OCI-LY7 (cell line): ENCODE measurements at regions of chr17 and their contacts with region 1.

Region 1: DNA sequence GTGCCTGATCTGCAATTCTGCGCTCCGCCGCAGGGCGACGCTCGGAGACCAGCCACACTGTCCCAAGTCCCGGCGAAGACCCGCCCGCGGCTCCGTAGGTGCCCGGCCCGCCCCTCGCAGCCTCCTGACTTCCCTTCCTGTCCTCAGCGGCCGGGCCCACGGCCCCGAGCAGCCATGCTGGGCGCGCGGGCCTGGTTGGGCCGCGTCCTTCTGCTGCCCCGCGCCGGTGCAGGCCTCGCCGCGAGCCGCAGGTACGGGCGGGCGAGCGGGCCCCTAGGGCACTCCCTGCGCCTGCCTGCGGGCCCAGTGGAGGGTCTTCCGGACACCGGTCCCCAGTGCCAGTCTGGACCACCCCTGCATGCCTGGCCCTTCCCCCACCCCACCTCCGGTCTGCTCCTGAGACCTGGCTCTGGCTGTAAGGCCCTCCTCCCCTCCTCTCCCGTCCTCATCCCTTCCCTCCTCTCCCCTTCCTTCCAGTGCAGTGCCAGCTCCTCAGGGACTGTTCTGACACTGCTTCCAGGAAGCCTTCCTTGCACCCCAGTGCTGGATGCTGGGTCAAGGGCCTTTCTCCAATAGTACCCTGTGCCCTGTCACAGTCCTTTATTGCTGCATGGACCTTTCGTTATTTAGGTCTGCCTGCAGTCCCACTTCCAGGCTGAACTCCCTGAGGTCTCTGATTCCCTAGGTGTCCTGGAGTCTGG is at the start of gene SPATA20:
- DNase-seq: peak; percentile 86
- H3K4me3 ChIP-seq: peak within 1 kb of the TSS; percentile 41
- H3K27ac ChIP-seq: no peak within 1 kb of the TSS
- H3K4me1 ChIP-seq: peaks cover 13% of the 10 kb centered on the region
- CTCF ChIP-seq: peak; percentile 91
- total RNA-seq, gene SPATA20: 4.5 and 8.3 TPM in 2 replicates

Region 2: DNA sequence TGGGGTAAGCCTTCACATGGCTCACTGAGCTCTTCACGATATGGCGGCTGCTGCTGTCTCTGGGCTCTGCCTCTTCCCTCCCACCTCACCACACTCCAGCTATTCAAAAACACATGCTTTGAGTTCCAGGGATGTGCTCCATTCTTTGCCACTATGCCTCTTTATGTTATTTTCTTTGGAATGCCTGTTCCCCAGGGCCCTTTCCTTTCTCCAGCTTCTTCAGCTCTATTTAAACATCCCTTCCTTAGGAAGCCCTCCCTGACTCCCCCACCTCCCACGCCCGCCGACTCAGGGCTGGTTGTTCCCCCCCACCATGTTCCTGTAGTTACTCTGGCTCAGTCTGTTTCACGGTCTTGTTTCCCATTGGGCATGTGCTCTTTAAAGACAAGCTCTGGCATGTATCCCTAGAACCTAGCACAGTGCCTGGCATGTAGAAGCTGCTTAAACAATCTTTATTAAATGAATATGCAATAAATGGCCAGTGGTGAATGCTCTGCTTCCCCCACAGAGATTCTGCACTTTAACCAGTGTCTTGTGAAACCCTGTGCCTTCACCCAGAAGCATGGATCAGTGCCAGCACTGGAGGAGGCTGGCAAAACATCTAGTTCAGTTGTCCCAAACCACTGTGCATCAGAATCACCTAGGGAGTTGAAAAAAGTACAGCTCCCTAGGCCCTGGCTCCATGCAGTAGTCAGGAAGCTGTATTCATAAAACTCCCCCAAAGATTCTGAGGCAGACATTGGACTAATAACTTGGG is 32.1 kb before region 1 on chr17:
- CTCF ChIA-PET with region 1: no interaction called
- POLR2A ChIA-PET with region 1: no interaction called
- intact Hi-C with region 1: no loop called
- DNase-seq: no peak
- H3K4me3 ChIP-seq: no peak overlapping the region
- H3K27ac ChIP-seq: no peak overlapping the region
- H3K4me1 ChIP-seq: no peaks in the 10 kb centered on the region
- CTCF ChIP-seq: no peak

Region 3: DNA sequence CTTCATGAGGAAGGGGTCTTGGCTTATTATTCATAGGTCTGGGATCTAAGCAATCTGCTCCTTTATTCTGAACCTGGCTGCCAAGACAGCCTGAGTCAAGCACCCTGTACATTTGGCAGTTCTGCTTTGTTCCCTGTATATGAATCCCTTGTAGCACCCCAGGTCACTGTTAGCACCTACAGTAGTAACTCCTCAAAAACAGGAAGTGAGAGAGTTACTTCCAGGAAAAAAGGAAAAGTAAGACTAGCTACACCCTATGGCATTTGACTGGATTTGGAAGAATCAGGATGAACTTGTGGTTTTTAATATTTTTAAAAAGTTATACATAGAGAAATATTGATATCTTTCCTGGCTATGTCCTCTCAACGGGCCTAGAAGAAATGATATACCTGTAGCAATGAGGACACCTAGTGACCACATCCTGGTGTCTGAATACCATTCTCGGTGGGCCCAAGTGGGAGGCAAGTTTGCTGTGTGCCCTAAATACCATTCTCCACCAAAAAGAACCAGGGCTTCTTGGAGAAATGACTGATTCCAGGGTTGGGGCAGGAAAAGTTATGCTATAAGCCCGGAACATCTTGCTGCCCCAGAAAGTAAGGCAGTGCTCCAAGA is 150.6 kb after region 1 on chr17:
- CTCF ChIA-PET with region 1: no interaction called
- POLR2A ChIA-PET with region 1: no interaction called
- intact Hi-C with region 1: loop called (anchors 1 kb)
- DNase-seq: no peak
- H3K4me3 ChIP-seq: no peak overlapping the region
- H3K27ac ChIP-seq: no peak overlapping the region
- H3K4me1 ChIP-seq: no peaks in the 10 kb centered on the region
- CTCF ChIP-seq: peak; percentile 48; the same call in 1 of the 2 replicates

Region 4: DNA sequence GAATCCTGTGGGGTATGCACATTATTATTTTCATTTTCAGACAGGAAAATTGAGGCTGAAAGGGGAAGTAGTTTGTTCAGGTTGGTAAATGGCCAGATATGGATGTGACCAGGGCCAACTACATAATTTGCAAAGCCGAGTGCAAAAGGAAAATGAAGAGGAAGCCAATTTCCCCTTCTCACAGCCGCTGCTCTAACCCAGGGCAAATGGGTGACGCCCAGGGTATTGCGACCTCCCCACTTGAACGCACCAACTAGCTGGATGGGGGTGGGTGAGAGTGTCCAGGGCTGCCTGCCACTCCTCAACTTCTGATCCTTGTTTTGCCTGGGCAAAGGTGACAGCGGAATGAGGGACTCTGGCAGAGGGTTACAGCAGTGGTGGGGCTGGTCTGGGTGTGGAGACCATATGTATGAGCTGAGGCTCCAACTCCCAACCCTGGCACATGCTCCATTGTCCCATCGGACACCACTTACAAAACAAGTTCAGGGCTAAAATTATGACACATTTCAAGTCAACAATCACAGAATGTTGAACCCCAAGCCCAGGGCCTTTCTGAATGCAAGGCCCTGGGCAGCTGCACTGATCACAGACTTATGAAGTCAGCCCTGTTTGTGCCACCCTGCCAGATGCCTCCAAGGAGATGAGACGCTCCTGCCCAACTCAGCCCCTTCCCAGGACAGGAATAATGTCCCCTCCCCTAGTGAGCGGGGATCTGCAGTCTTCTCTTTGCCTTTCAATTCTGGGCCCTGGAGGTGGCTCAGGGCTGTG is 218.5 kb after region 1 on chr17:
- CTCF ChIA-PET with region 1: no interaction called
- POLR2A ChIA-PET with region 1: no interaction called
- intact Hi-C with region 1: loop called (anchors 10 kb)
- DNase-seq: peak; percentile 41
- H3K4me3 ChIP-seq: peak overlapping the region; percentile 16
- H3K27ac ChIP-seq: no peak overlapping the region
- H3K4me1 ChIP-seq: peaks cover 36% of the 10 kb centered on the region
- CTCF ChIP-seq: no peak

Region 5: GRCh38 chr17:50841949-50842354 is 294.8 kb after region 1 on chr17:
- CTCF ChIA-PET with region 1: no interaction called
- POLR2A ChIA-PET with region 1: no interaction called
- intact Hi-C with region 1: loop called (anchors 2 kb)
- DNase-seq: peak; percentile 61
- H3K4me3 ChIP-seq: no peak overlapping the region
- H3K27ac ChIP-seq: no peak overlapping the region
- H3K4me1 ChIP-seq: no peaks in the 10 kb centered on the region
- CTCF ChIP-seq: peak; percentile 83